ENCODE measurements at regions of chr17 and their contacts with region 1.

Region 1: GRCh38 chr17:40443583-40444327 is 505 bp downstream of the IGFBP4 start:
- DNase-seq: peak; percentile 59 to 91 (median 74)
- ATAC-seq: peak; percentile 49 to 79 (median 72)
- H3K4me3 ChIP-seq: peak overlapping the region; percentile 18 to 52 (median 28)
- H3K27ac ChIP-seq: peak overlapping the region in 3 of 4 donors; percentile 17 to 44 (median 39)
- H3K4me1 ChIP-seq: peaks cover 6 to 12% (median 9%) of the 10 kb centered on the region in 3 donors
- H3K27me3 ChIP-seq: no peaks in the 10 kb centered on the region
- CTCF ChIP-seq: peak in 1 of 4 donors; percentile 19

Region 2: GRCh38 chr17:40479533-40480480 is 36.1 kb after region 1 on chr17:
- intact Hi-C with region 1: loop called in 1 of 3 experiments (anchors 5 kb)
- DNase-seq: no peak
- ATAC-seq: no peak
- H3K4me3 ChIP-seq: no peak overlapping the region
- H3K27ac ChIP-seq: no peak overlapping the region
- H3K4me1 ChIP-seq: no peaks in the 10 kb centered on the region
- H3K27me3 ChIP-seq: no peaks in the 10 kb centered on the region
- CTCF ChIP-seq: no peak

Region 3: GRCh38 chr17:40531051-40531991 is 87.6 kb after region 1 on chr17:
- intact Hi-C with region 1: loop called in 2 of 3 experiments (anchors 5 kb)
- DNase-seq: peak in 2 of 6 donors; percentile 14 to 32
- ATAC-seq: no peak
- H3K4me3 ChIP-seq: no peak overlapping the region
- H3K27ac ChIP-seq: no peak overlapping the region
- H3K4me1 ChIP-seq: no peaks in the 10 kb centered on the region
- H3K27me3 ChIP-seq: no peaks in the 10 kb centered on the region
- CTCF ChIP-seq: no peak

Measured in pancreas (tissue), 10 donors.